ENCODE measurements at regions of chr4 and their contacts with region 1.

Region 1: DNA sequence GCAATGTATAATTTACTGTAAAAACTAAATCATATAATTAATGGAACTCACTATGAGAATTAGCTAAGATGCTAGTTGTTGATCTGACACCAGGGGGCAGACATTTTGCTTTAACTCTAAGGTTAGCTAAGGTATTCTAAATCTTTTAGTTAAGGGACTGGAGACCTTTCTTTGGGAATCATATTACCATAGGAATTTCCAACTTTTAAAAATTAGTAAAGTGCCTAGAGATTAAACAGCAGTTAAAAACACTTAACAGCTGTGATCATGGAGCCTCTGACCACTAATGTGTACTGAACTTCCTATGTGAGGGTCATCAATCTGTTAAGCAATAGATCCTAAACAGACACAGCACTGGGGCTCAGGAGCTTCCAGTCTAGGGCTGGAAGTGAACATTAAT is 226.6 kb downstream of the NSUN7 start:
- DNase-seq: peak; percentile 15

Region 2: GRCh38 chr4:40763228-40763716 is 213.1 kb before region 1 on chr4:
- CTCF ChIA-PET with region 1: no interaction called
- POLR2A ChIA-PET with region 1: no interaction called
- DNase-seq: no peak

Region 3: GRCh38 chr4:40937140-40937725 is 39.1 kb before region 1 on chr4:
- CTCF ChIA-PET with region 1: interaction called, 11 read pairs
- POLR2A ChIA-PET with region 1: no interaction called
- DNase-seq: no peak

Region 4: DNA sequence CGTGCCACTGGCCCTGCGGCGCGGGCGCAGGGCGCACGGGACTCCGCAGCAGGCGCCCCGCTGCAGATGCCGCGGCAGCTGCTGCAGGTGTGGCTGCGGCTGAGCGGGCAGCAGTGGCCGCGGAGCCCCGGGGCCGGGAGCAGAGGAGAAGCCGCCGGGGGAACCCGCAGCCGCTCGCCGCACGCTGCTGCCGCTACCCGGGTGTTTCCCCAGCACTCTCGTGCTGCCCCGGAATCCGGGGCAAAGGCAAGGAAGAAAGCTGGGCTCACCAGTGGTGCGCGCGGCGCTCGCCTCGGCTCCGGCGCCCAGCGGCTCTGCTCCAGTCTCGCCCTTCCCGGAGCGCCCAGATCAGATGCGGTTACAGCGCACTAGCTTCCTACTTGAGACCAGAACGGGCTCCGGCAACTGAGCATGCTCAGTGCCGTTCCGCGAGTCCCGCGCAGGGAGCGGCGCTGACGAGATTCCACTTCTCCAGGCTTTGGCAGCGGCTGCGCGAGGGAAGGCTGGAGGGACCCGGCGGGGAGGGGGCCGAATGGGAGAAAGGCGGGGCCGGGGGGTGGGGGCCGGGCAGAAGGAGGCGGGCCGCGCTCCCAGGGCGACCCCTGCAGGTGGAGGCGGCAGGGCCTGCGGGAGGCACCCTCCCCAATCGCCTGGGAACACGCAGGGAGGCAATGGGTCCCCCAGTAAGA is 237.9 kb after region 1 on chr4 and contains the start of gene APBB2:
- CTCF ChIA-PET with region 1: interaction called, 12 read pairs
- POLR2A ChIA-PET with region 1: interaction called, 6 read pairs
- DNase-seq: peak; percentile 82